Posterior vena cava (tissue), 2 donors: ENCODE measurements at regions of chrX and their contacts with region 1.

Region 1: DNA sequence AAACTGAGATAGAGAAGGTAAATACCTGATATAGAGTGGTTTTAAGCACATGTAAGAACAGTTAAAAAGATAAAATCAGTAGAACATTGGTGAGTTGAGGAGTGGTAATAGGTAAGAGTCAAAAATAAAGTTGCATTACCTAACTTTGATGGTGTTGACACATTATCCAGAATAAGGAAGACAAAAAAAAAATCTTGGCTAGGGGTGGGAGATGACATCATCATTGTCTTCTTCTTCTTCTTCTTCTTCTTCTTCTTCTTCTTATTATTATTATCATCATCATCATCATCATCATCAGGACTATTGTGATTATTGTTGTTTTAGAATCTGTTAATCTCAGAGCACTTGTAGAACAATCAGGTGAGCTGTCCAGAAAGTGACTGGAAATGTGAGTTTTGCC is 599.1 kb downstream of the PPP4R3C start:
- DNase-seq: no peak

Region 2: DNA sequence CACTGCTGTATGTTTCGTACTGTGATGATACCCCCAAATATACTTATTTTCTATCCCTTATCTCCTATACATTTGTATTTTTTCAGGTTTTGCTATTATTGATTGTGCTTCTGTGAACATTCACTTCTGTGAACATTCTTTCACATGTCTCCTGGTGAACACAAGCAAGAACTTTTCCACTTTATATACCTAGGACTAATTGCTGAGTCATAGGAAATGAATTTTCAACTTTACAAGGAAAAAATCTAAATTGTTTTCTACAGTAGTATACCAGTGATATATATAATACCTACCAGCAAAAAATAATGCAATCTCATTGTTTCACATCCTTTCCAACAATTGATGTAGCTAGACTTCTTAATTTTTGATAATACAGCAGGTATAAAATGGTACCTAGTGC is 865.4 kb before region 1 on chrX:
- intact Hi-C with region 1: no loop called
- DNase-seq: no peak

Region 3: DNA sequence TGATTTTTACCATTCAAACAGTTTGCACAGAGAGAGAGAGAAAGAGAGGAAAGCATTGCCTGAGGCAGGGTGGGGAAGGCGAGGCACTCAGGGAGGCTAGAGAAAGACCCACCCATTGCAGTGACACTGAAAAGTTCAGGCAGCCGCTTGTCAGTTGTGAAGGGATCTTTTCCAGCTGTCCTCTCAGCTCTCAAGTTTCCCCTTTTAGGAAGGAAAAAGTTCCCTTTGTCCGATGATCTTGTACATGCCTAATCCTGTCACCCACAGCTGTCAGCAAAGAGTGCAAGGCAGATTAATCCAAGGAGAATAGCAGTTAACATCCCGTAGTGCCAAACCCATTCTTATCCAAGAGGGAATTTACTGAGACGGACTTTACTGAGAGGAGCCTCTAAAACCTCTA is 393.1 kb before region 1 on chrX:
- intact Hi-C with region 1: loop called in 1 of 2 experiments (anchors 10 kb)
- DNase-seq: no peak

Region 4: DNA sequence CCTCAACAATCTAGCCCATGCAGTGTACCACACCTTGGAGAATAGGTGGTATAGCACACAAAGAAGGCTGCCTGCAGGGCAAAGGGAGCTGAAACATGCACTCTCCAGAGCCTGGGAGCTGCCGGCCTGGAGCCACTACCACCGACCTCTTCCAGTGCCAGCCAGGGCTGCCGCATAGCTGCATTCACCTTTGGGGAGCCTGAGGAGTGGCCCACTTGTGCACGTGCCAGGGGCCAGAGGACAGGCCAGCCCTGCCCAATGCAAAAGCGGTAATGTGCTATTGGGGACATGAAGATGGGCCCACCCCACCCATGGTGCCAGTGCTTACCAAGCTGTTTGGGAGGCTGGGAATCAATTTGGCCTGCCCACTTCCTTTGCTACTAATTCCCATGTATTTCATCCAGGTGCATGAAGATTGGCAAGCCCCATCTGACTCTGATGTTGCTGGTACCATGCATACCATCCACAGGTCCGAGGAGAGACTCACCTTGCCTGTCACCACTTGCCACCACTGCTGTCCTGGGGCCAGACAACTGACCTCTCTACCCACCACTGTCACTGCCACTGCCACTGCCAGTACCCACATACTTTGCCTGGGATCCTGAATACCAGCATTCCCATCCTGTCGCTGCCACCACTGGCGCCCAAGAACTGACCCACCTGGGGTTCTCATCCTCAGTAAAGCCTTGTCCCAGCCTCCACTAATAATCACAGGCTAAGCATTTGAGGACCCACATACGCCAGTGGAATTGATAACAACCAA is 141.2 kb before region 1 on chrX:
- intact Hi-C with region 1: no loop called
- DNase-seq: peak; percentile 58